Astrocyte of the cerebellum (primary cell): ENCODE measurements at regions of chr12 and their contacts with region 1.

Region 1: DNA sequence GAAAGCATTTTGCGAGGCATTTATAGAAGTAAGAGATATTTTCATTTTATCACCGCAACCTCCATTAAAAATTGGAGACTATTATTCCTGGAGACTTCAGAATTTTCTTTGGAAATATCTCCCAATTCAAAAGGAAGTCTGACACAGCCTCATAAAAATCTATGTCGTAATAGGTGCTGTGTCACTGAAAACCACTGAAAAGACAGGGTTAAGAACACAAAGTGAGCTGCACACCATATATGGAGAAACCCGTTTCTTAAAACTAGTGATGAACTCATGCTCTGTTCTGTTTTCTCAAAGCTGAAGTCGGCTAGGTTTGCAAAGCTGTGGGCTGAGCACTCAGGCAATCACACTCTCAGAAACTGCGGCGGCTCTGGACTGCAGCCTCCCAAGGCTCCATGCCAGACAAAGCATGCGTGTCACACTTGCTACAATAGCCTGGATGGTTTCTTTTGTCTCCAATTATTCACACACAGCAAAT is at the start of gene GLIPR1:
- DNase-seq: peak; percentile 98
- H3K4me3 ChIP-seq: peak within 1 kb of the TSS; percentile 60
- CTCF ChIP-seq: no peak

Region 2: DNA sequence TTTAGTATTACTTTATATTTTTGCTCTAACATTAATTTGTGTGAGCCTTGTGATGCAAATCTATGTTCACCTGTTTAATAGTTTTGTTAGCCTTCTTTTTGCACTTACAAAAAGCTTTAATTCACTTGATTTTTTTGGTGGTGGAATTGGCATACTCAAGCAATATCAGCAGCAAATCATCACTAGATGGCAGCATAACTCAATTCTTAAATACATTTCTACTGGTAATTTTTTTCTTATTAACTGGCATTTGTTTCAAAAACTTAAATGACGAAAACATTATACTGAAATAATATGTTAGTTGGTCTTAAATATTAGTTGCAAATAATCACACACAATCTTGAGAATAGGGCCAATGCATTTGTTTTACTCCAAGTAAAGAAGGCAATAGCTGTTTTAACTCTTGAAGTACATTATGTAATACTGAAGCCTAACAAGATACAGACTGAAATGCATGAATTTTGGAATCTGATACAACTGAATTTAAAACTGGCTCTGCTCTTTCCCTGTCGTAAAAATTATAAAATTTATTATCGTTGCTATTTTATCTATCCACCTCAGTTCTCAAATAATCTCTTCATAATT is 791.3 kb before region 1 on chr12:
- in situ Hi-C with region 1: loop called (anchors 25 kb)
- DNase-seq: peak; percentile 59
- H3K4me3 ChIP-seq: no peak overlapping the region
- CTCF ChIP-seq: peak; percentile 51

Region 3: GRCh38 chr12:75790219-75790618 is 309.7 kb after region 1 on chr12:
- in situ Hi-C with region 1: no loop called
- DNase-seq: no peak
- H3K4me3 ChIP-seq: no peak overlapping the region
- CTCF ChIP-seq: no peak